HEK293T (cell line): ENCODE measurements at regions of chr1 and their contacts with region 1.

Region 1: GRCh38 chr1:2174348-2175054 is 20.1 kb downstream of the FAAP20 start:
- DNase-seq: peak; percentile 90

Region 2: DNA sequence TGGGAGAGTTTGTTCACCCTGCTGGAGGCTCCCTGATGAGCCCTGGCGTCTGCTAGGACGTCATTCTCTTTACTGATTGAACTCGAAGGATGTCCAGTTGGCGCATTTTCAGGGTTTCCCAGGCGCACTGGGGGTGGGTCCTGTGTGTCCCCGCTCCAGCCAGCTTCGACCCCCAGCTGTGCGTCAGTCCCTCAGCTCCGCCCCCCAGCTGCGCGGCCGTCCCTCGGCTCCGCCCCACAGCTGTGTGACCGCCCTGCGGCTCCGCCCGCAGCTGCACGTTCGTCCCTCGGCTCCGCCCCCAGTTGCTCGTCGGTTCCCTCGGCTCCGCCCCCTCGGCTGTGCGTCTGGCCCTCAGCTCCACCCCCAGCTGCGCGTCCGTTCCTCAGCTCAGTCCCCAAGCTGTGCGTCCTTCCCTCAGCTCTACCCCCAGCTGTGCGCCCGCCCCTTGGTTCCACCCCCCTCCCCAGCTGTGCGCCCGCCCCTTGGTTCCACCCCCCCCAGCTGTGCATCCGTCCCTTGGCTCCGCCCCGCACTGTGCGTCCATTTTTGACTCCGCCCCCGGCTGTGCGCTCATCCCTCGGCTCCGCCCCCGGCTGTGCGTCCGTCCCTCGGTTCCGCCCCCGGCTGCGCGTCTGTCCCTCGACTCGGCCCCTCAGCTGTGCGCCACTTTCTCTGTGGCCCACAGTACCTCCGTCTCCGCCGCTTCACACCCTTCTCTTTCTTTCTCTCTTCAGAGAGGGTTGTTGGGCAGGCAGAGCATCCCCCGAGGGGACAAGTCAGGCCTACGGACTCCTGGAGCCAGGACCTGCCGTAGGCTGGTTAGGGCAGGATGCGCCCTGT is 41.2 kb before region 1 on chr1:
- CTCF ChIA-PET with region 1: interaction called, 14 read pairs
- POLR2A ChIA-PET with region 1: no interaction called
- DNase-seq: peak; percentile 98

Region 3: GRCh38 chr1:2189459-2190425 is 15.2 kb after region 1 on chr1:
- CTCF ChIA-PET with region 1: interaction called, 10 read pairs
- POLR2A ChIA-PET with region 1: no interaction called
- DNase-seq: peak; percentile 89